ENCODE measurements at regions of chr2 and their contacts with region 1.

Region 1: GRCh38 chr2:38130876-38131275 is 54.9 kb upstream of the CYP1B1 start:
- DNase-seq: no peak
- H3K4me3 ChIP-seq: no peak overlapping the region
- H3K27ac ChIP-seq: no peak overlapping the region
- H3K4me1 ChIP-seq: no peaks in the 10 kb centered on the region
- H3K27me3 ChIP-seq: no peaks in the 10 kb centered on the region
- CTCF ChIP-seq: no peak

Region 2: DNA sequence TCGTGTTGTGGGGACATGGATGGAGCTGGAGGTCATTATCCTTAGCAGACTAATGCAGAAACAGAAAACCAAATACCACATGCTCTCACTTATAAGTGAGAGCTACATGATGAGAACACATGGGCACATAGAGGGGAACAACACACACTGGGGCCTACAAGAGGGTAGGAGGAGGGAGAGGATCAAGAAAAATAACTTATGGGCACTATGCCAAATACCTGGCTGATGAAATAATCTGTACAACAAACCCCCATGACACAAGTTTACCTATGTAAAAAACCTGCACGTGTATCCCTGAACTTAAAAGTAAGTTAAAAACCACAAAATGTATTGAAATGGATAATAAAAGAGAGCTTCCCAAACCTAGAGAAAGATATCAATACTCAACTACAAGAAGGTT is 1492.0 kb before region 1 on chr2:
- CTCF ChIA-PET with region 1: no interaction called
- POLR2A ChIA-PET with region 1: no interaction called
- intact Hi-C with region 1: no loop called
- DNase-seq: no peak
- H3K4me3 ChIP-seq: no peak overlapping the region
- H3K27ac ChIP-seq: no peak overlapping the region
- H3K4me1 ChIP-seq: peaks cover 2% of the 10 kb centered on the region
- H3K27me3 ChIP-seq: no peaks in the 10 kb centered on the region
- CTCF ChIP-seq: no peak

Region 3: DNA sequence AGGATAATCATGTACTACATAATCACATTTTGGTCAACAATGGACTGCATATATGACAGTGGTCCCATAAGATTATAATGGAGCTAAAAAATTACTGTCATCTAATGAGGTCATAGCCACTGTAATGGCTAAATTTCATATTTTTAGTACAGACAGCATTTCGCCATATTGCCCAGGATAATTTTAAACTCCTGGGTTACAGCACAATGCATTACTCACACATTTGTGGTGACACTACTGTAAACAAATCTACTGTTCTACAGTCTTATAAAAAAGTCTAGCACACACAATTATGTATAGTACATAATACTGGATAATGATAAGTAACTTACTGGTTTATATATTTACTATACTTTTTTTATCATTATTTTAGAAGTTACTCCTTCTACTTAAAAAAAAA is 986.9 kb before region 1 on chr2:
- CTCF ChIA-PET with region 1: interaction called, 10 read pairs
- POLR2A ChIA-PET with region 1: no interaction called
- intact Hi-C with region 1: no loop called
- DNase-seq: no peak
- H3K4me3 ChIP-seq: no peak overlapping the region
- H3K27ac ChIP-seq: no peak overlapping the region
- H3K4me1 ChIP-seq: peaks cover 12% of the 10 kb centered on the region
- H3K27me3 ChIP-seq: no peaks in the 10 kb centered on the region
- CTCF ChIP-seq: no peak

Measured in PC-9 (cell line).